ENCODE measurements at regions of chr20 and their contacts with region 1.

Region 1: DNA sequence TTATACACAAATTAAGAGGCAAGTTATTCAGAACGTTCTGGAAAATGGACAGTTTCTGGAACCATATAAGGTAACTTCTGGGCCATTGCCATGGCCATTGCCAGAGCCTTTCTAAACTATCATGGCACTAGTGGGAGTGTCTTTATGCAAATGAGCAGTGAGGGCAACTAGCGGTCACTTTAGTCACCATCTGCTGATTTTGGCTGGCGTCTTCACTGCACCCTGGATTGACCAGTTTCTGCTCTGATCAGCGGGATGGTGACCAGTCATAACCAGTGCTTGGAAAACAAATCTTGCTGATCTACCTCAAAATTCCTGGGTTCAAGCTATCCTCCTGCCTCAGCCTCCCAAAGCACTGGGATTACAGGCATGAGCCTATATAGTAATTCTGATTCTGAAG is 7.3 kb upstream of the SNTA1 start:
- DNase-seq: no peak
- H3K4me3 ChIP-seq: no peak overlapping the region
- H3K27ac ChIP-seq: no peak overlapping the region
- H3K4me1 ChIP-seq: no peaks in the 10 kb centered on the region
- H3K27me3 ChIP-seq: no peaks in the 10 kb centered on the region
- CTCF ChIP-seq: no peak
- POLR2A ChIP-seq: no peak

Region 2: GRCh38 chr20:33667245-33668086 is 216.6 kb after region 1 on chr20:
- intact Hi-C with region 1: loop called (anchors 2 kb)
- DNase-seq: peak; percentile 50 to 69
- H3K4me3 ChIP-seq: peak overlapping the region; percentile 48 to 58
- H3K27ac ChIP-seq: peak overlapping the region; percentile 90 to 95
- H3K4me1 ChIP-seq: peaks cover 0 to 10% of the 10 kb centered on the region in 2 donors
- H3K27me3 ChIP-seq: no peaks in the 10 kb centered on the region
- CTCF ChIP-seq: peak in 1 of 4 experiments; percentile 98
- POLR2A ChIP-seq: peak in 1 of 2 donors; percentile 29

Measured in uterus (tissue), 4 donors.